ENCODE measurements at regions of chrX and their contacts with region 1.

Region 1: GRCh38 chrX:283115-283845 is 2.1 kb downstream of the PLCXD1 start:
- DNase-seq: peak; percentile 91
- ATAC-seq: peak; percentile 98
- H3K4me3 ChIP-seq: peak overlapping the region; percentile 47 to 77 (median 61)
- H3K4me3 Mint-ChIP-seq: peak overlapping the region; percentile 97
- H3K27ac ChIP-seq: peak overlapping the region; percentile 40 to 47
- H3K27ac Mint-ChIP-seq: peak overlapping the region; percentile 91
- H3K4me1 ChIP-seq: peaks cover 0 to 6% of the 10 kb centered on the region in 2 donors
- H3K4me1 Mint-ChIP-seq: peaks cover 21% of the 10 kb centered on the region
- H3K27me3 ChIP-seq: peaks cover 0 to 3% (median 0%) of the 10 kb centered on the region in 4 experiments
- H3K27me3 Mint-ChIP-seq: no peaks in the 10 kb centered on the region
- CTCF ChIP-seq: no peak

Region 2: GRCh38 chrX:307261-308111 is 24.2 kb after region 1 on chrX:
- CTCF ChIA-PET with region 1: no interaction called
- POLR2A ChIA-PET with region 1: no interaction called
- intact Hi-C with region 1: no loop called
- DNase-seq: no peak
- ATAC-seq: no peak
- H3K4me3 ChIP-seq: no peak overlapping the region
- H3K4me3 Mint-ChIP-seq: no peak overlapping the region
- H3K27ac ChIP-seq: no peak overlapping the region
- H3K27ac Mint-ChIP-seq: no peak overlapping the region
- H3K4me1 ChIP-seq: no peaks in the 10 kb centered on the region
- H3K4me1 Mint-ChIP-seq: no peaks in the 10 kb centered on the region
- H3K27me3 ChIP-seq: no peaks in the 10 kb centered on the region
- H3K27me3 Mint-ChIP-seq: no peaks in the 10 kb centered on the region
- CTCF ChIP-seq: no peak

Region 3: DNA sequence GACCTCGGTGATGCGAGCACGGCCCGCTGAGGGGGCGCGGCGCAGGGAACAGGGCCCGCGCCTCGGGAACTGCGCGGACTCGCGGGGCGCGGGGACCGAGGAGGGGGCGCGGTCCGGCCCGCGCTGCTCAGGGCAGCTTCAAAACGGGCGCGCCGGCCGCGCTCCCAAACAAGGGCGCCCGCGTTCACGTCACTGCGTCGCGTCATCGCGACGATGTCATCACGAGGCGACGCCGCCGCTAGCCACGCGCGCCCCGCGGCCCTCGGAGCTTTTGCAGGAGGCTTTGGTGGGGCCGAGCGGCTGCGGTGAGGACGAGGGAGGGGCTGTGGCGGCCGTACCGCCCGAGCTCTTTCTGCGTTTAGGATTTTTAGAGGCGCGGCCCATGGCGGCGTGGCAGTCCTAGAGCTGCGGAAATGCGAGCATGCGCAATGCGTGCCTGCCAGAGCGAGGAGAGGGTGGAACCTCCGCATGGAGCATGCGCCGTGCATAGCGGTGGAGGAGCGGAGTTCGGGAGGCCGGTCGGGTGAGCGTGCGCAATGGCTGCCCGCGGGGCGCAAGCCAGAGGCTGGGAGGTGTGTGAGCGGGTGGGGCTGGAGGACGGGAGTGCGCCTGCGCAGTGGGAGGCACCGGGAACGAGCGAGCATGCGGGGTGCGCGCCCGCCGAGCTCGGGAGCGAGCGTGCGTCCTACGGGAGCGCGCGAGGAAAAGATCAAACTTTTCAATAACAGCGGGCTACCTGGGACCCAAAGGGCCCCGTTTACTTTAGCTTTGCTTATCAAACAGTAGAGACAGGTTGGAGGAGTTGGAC is 103.7 kb after region 1 on chrX and contains the start of gene PPP2R3B:
- CTCF ChIA-PET with region 1: no interaction called
- POLR2A ChIA-PET with region 1: no interaction called
- intact Hi-C with region 1: loop called (anchors 2 kb)
- DNase-seq: peak; percentile 100
- ATAC-seq: peak; percentile 88
- H3K4me3 ChIP-seq: peak within 1 kb of the TSS; percentile 82 to 98 (median 91)
- H3K4me3 Mint-ChIP-seq: peak within 1 kb of the TSS; percentile 93
- H3K27ac ChIP-seq: peak within 1 kb of the TSS; percentile 97 to 100
- H3K27ac Mint-ChIP-seq: peak within 1 kb of the TSS; percentile 99
- H3K4me1 ChIP-seq: peaks cover 4 to 14% of the 10 kb centered on the region in 2 donors
- H3K4me1 Mint-ChIP-seq: peaks cover 7% of the 10 kb centered on the region
- H3K27me3 ChIP-seq: no peaks in the 10 kb centered on the region
- H3K27me3 Mint-ChIP-seq: no peaks in the 10 kb centered on the region
- CTCF ChIP-seq: no peak
- total RNA-seq, gene PPP2R3B: 35.2 and 43.3 TPM in 2 replicates